ENCODE measurements at regions of chr19 and their contacts with region 1.

Region 1: DNA sequence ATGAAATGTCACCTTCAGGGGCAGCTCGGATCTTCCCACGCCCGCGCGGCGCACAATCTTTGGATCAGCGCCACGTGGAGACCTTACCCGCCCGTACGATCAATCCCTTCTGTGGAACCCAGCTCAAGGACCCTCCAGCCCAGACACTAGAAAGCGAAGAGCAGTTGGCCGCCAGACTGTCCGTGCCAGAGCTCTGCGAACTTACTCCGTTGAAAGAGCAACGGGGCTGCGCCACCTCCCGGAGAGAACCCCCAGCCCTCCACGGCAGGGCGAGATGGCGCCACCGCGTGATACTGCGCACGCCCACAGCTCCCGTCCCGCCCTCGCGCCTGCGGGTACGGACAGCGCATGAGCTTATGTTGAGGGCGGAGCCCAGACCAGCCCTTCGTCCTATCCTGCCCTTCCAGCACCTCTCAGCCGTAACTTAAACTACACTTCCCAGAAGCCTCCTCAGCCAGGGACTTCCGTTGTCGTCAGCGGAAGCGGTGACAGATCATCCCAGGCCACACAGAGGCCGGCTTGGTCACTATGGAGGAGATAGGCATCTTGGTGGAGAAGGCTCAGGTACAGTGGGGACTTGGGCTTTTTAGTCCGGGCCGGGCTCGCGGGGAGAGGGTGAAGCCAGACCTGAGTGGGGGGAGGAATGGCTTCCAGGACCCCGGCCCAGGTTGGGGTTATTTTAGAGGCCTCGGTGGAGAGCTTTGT is at the start of gene PSMC4:
- DNase-seq: peak; percentile 98
- ATAC-seq: peak; percentile 96
- H3K4me3 Mint-ChIP-seq: peak within 1 kb of the TSS; percentile 98
- H3K27ac Mint-ChIP-seq: peak within 1 kb of the TSS; percentile 98
- H3K4me1 Mint-ChIP-seq: peaks cover 39% of the 10 kb centered on the region
- H3K27me3 Mint-ChIP-seq: no peaks in the 10 kb centered on the region
- CTCF ChIP-seq: peak; percentile 21
- total RNA-seq, gene PSMC4: 109 and 115 TPM in 2 replicates

Region 2: GRCh38 chr19:39824143-39825092 is 146.4 kb before region 1 on chr19:
- CTCF ChIA-PET with region 1: no interaction called
- POLR2A ChIA-PET with region 1: interaction called, 5 read pairs
- intact Hi-C with region 1: loop called (anchors 1 kb)
- DNase-seq: peak; percentile 67
- ATAC-seq: peak; percentile 98
- H3K4me3 Mint-ChIP-seq: no peak overlapping the region
- H3K27ac Mint-ChIP-seq: no peak overlapping the region
- H3K4me1 Mint-ChIP-seq: peaks cover 12% of the 10 kb centered on the region
- H3K27me3 Mint-ChIP-seq: no peaks in the 10 kb centered on the region
- CTCF ChIP-seq: no peak

Region 3: GRCh38 chr19:39878398-39878797 is 92.4 kb before region 1 on chr19:
- CTCF ChIA-PET with region 1: interaction called, 5 read pairs
- POLR2A ChIA-PET with region 1: interaction called, 24 read pairs
- intact Hi-C with region 1: no loop called
- DNase-seq: no peak
- ATAC-seq: no peak
- H3K4me3 Mint-ChIP-seq: no peak overlapping the region
- H3K27ac Mint-ChIP-seq: no peak overlapping the region
- H3K4me1 Mint-ChIP-seq: no peaks in the 10 kb centered on the region
- H3K27me3 Mint-ChIP-seq: no peaks in the 10 kb centered on the region
- CTCF ChIP-seq: no peak

Region 4: GRCh38 chr19:39924389-39924788 is 46.4 kb before region 1 on chr19:
- CTCF ChIA-PET with region 1: interaction called, 10 read pairs
- POLR2A ChIA-PET with region 1: interaction called, 4 read pairs
- intact Hi-C with region 1: no loop called
- DNase-seq: no peak
- ATAC-seq: no peak
- H3K4me3 Mint-ChIP-seq: no peak overlapping the region
- H3K27ac Mint-ChIP-seq: no peak overlapping the region
- H3K4me1 Mint-ChIP-seq: no peaks in the 10 kb centered on the region
- H3K27me3 Mint-ChIP-seq: no peaks in the 10 kb centered on the region
- CTCF ChIP-seq: no peak

Region 5: DNA sequence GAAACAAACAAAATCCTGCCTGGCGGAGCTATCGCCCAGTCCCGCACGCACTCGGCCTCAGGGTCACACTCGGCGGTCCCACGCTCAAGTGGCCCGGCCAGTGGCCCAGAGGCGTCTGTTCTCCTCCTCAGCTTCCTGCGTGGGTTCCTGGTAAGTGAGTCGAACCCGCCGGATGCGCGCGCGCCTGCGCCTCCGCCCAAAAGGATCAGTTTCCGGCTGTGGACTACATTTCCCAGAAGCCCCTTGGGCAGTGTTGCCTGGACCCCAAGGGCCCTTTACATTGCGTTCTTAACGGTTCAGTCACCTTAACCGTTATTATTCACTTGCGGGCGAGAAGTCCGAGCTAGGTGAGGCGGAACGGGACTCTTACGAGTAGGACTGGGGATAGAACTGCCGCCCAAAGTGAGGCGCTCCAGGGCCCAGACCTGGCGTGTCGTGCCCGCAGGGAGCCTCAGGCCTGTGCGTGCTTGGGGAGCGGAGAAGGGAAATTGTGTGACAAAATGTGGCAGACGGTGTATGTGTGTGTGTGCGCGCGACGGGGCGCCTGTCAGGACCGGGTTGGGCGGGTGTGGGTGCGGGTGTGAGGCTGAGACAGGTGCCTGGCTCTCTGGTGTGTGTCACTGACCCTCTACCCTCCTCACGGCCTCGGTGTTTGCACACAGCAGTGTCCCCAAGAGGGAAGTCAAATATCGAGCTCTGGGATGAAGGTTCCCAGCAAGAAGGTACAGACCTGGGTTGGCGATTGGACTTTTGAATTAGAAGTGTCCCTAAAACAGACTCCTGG is 26.2 kb after region 1 on chr19 and contains the start of gene ZNF546:
- CTCF ChIA-PET with region 1: interaction called, 15 read pairs
- POLR2A ChIA-PET with region 1: interaction called, 24 read pairs
- intact Hi-C with region 1: loop called (anchors 1 kb)
- DNase-seq: peak; percentile 86
- ATAC-seq: peak; percentile 93
- H3K4me3 Mint-ChIP-seq: peak within 1 kb of the TSS; percentile 96
- H3K27ac Mint-ChIP-seq: peak within 1 kb of the TSS; percentile 97
- H3K4me1 Mint-ChIP-seq: peaks cover 35% of the 10 kb centered on the region
- H3K27me3 Mint-ChIP-seq: no peaks in the 10 kb centered on the region
- CTCF ChIP-seq: no peak
- total RNA-seq, gene ZNF546: 5.8 and 11.6 TPM in 2 replicates

Region 6: DNA sequence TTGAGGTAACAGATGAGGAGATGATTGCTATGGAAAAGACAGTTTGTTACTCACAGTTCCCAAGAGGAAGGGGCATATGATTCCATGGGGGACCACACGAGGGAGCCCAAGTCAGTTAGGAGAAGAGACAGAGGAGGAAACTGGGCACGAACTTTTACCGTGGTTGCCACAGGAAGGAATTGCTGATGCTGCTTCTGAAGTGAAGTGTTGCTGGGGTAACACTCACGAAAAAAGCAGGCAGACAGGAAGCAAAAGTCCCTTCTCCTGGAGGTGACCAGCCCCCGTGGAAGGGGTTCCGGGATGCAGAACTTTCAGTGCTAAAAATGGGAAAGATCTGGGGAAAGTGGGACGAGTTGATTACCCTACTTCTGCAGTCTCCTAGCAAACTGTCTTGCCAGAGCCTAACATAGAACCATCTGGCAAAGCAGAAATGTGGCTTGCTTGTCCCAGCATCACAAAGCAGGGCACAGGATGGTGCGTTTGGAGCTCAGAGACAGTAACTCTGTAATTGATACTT is 185.0 kb after region 1 on chr19:
- CTCF ChIA-PET with region 1: no interaction called
- POLR2A ChIA-PET with region 1: no interaction called
- intact Hi-C with region 1: no loop called
- DNase-seq: no peak
- ATAC-seq: no peak
- H3K4me3 Mint-ChIP-seq: no peak overlapping the region
- H3K27ac Mint-ChIP-seq: no peak overlapping the region
- H3K4me1 Mint-ChIP-seq: peaks cover 9% of the 10 kb centered on the region
- H3K27me3 Mint-ChIP-seq: no peaks in the 10 kb centered on the region
- CTCF ChIP-seq: no peak

Region 7: GRCh38 chr19:40190891-40191835 is 220.3 kb after region 1 on chr19 and contains the start of gene MAP3K10:
- CTCF ChIA-PET with region 1: no interaction called
- POLR2A ChIA-PET with region 1: interaction called, 4 read pairs
- intact Hi-C with region 1: loop called (anchors 1 kb)
- DNase-seq: peak; percentile 83
- ATAC-seq: peak; percentile 89
- H3K4me3 Mint-ChIP-seq: peak within 1 kb of the TSS; percentile 90
- H3K27ac Mint-ChIP-seq: peak within 1 kb of the TSS; percentile 86
- H3K4me1 Mint-ChIP-seq: peaks cover 31% of the 10 kb centered on the region
- H3K27me3 Mint-ChIP-seq: no peaks in the 10 kb centered on the region
- CTCF ChIP-seq: no peak
- total RNA-seq, gene MAP3K10: 16.4 and 20.5 TPM in 2 replicates